GM18951 (cell line): ENCODE measurements at regions of chr11 and their contacts with region 1.

Region 1: DNA sequence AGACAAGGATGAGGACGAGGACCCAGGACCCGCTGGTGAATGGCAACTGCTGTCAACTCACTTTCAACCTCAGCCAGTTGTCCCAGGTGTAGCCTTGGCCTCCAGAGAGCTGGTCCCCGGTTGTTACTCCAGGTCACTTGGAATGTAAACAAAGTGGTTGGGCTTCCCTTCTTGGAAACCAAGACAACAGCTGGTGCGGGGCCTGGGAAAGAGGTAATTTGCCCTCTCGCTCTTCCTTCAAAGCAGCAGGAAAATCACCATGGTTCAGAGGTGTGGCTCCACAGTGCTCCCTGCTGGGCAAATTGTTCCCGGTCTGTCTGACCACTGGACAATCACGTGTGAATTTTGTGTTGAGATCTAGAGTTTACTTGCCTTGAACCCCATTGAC is 15.0 kb downstream of the SLC1A2 start:
- POLR2A ChIP-seq: no peak

Region 2: GRCh38 chr11:34565417-34566207 is 838.8 kb before region 1 on chr11:
- in situ Hi-C with region 1: loop called (anchors 25 kb)
- POLR2A ChIP-seq: no peak

Region 3: DNA sequence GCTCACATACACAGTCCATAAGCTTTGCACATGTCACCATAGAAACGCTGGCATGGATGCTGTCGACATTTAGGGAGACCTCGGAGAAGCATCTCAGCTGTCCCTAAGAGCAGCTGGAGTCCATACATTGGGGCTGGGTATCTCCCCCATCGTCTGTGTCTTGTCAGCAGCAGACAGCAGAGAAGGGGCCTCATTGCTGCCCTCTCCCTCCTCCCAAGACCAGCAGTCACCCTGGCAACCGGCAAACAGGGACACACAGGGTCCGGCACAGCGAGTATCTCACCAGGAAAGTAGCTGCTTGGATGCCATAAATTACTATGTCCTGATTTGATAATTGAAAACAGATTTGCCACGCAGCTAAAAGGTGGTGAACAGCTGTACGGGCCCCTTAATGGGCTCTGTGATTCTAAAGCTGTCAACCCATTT is 181.0 kb before region 1 on chr11:
- in situ Hi-C with region 1: no loop called
- POLR2A ChIP-seq: no peak